ENCODE measurements at regions of chr3 and their contacts with region 1.

Region 1: DNA sequence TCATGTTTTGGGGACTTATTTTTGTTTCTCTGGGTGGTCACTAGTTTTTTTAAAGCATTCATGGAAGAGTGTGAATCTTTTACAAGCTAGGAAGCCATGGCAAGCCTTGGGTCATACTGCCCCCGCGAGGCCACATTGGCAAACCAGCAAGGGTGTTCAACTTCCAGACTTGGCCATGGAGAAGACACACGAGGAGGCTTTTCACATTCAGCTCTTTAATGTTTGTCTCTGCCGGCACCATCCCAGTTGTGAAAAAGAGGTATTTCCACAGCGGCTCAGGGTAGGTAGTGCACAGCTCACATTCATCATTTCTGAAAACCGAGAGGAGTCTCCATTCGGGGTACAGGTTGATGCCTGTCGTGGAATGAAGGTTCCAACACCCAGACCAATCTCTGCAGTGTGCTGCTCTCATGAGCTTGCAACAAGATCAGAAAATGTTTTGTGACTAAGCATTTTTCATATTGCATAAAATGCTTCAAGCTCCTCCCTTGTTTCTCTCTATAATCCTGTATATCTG is 7.7 kb downstream of the CCR5 start:
- DNase-seq: no peak
- ATAC-seq: peak; percentile 90
- H3K4me3 ChIP-seq: no peak overlapping the region
- H3K27ac ChIP-seq: no peak overlapping the region
- H3K4me1 ChIP-seq: peaks cover 12% of the 10 kb centered on the region
- H3K27me3 ChIP-seq: peaks cover 0 to 3% of the 10 kb centered on the region in 2 experiments; a peak in 2 of 4 replicates
- CTCF ChIP-seq: peak; percentile 77 to 80 (median 79)
- EP300 ChIP-seq: no peak
- POLR2A ChIP-seq: no peak
- RAD21 ChIP-seq: peak; percentile 92

Region 2: DNA sequence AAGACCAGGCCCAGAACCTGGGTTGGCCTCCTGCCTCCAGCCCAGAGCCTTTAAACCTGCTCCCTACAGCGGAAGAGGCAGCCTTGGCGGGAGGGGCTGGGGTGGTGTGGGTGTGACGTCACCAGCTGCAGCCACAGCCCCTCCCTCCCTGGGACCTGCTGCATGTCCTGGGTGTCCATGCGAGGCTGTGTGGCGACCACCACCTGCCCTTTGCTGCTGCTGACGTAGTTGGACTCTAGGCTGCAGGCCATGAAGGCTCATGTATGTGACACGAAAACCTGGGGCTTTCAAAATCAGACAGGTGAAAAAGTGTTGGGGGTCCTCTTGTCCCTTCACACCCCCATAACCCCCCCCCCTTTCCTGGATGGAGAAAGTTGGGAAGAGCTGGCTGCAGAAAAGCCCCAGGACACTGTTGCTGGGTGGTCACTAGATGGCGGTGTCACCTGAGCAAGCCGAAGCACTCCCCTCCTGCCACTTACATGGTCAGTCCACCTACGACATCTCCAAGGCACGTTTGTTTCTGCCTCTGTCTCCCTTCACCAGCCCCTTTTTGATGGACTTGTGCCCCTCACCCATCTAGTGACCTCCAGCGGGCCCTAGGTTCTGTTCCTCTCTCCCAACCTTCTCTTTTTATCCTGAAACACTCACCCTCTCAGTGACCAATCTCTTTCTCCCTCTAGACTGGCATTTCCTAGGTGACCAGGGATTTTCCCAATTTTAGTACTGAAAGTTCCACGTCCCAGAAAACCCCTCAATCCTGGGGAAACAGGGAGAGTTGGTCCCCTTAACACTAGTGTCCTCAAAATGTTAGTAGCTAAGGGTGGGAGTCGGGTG is 617.4 kb before region 1 on chr3:
- CTCF ChIA-PET with region 1: no interaction called
- POLR2A ChIA-PET with region 1: no interaction called
- RAD21 ChIA-PET with region 1: no interaction called
- SMC1A ChIA-PET with region 1: interaction called, 4 read pairs
- in situ Hi-C with region 1: loop called (anchors 10 kb)
- intact Hi-C with region 1: no loop called
- DNase-seq: peak; percentile 5
- ATAC-seq: peak; percentile 98
- H3K4me3 ChIP-seq: no peak overlapping the region
- H3K27ac ChIP-seq: no peak overlapping the region
- H3K4me1 ChIP-seq: no peaks in the 10 kb centered on the region
- H3K27me3 ChIP-seq: 0 out of 4 replicates have a peak, but pooled peaks cover 0 to 2% of the 10 kb centered on the region in 2 experiments
- CTCF ChIP-seq: peak; percentile 80 to 89 (median 83)
- EP300 ChIP-seq: no peak
- POLR2A ChIP-seq: no peak
- RAD21 ChIP-seq: peak; percentile 87

Region 3: GRCh38 chr3:46089237-46090011 is 289.1 kb before region 1 on chr3:
- CTCF ChIA-PET with region 1: interaction called, 714 read pairs
- POLR2A ChIA-PET with region 1: interaction called, 3 read pairs
- RAD21 ChIA-PET with region 1: interaction called, 396 read pairs
- SMC1A ChIA-PET with region 1: interaction called, 581 read pairs
- in situ Hi-C with region 1: loop called (anchors 5 kb)
- intact Hi-C with region 1: no loop called
- DNase-seq: peak; percentile 78
- ATAC-seq: peak; percentile 90
- H3K4me3 ChIP-seq: no peak overlapping the region
- H3K27ac ChIP-seq: peak overlapping the region; percentile 20; the same call in 1 of the 2 replicates
- H3K4me1 ChIP-seq: peaks cover 58% of the 10 kb centered on the region
- H3K27me3 ChIP-seq: no peaks in the 10 kb centered on the region
- CTCF ChIP-seq: no peak
- EP300 ChIP-seq: peak; percentile 24 to 75; a peak in 2 of 4 replicates
- POLR2A ChIP-seq: no peak
- RAD21 ChIP-seq: 0 out of 2 replicates have a peak, but pooled peaks have one; percentile 5

Region 4: GRCh38 chr3:46143951-46144473 is 234.5 kb before region 1 on chr3:
- CTCF ChIA-PET with region 1: no interaction called
- POLR2A ChIA-PET with region 1: no interaction called
- RAD21 ChIA-PET with region 1: no interaction called
- SMC1A ChIA-PET with region 1: no interaction called
- in situ Hi-C with region 1: no loop called
- intact Hi-C with region 1: no loop called
- DNase-seq: no peak
- ATAC-seq: no peak
- H3K4me3 ChIP-seq: no peak overlapping the region
- H3K27ac ChIP-seq: no peak overlapping the region
- H3K4me1 ChIP-seq: no peaks in the 10 kb centered on the region
- H3K27me3 ChIP-seq: no peaks in the 10 kb centered on the region
- CTCF ChIP-seq: no peak
- EP300 ChIP-seq: no peak
- POLR2A ChIP-seq: no peak
- RAD21 ChIP-seq: no peak

Region 5: GRCh38 chr3:46276502-46277099 is 101.9 kb before region 1 on chr3:
- CTCF ChIA-PET with region 1: interaction called, 23 read pairs
- POLR2A ChIA-PET with region 1: no interaction called
- RAD21 ChIA-PET with region 1: interaction called, 4 read pairs
- SMC1A ChIA-PET with region 1: interaction called, 3 read pairs
- in situ Hi-C with region 1: no loop called
- intact Hi-C with region 1: no loop called
- DNase-seq: no peak
- ATAC-seq: peak; percentile 90
- H3K4me3 ChIP-seq: no peak overlapping the region
- H3K27ac ChIP-seq: no peak overlapping the region
- H3K4me1 ChIP-seq: peaks cover 27% of the 10 kb centered on the region
- H3K27me3 ChIP-seq: 0 out of 4 replicates have a peak, but pooled peaks cover 0 to 2% of the 10 kb centered on the region in 2 experiments
- CTCF ChIP-seq: peak; percentile 67 to 87 (median 85)
- EP300 ChIP-seq: no peak
- POLR2A ChIP-seq: no peak
- RAD21 ChIP-seq: peak; percentile 83

Region 6: GRCh38 chr3:46297658-46298463 is 80.6 kb before region 1 on chr3:
- CTCF ChIA-PET with region 1: interaction called, 14 read pairs
- POLR2A ChIA-PET with region 1: no interaction called
- RAD21 ChIA-PET with region 1: interaction called, 6 read pairs
- SMC1A ChIA-PET with region 1: interaction called, 91 read pairs
- in situ Hi-C with region 1: no loop called
- intact Hi-C with region 1: no loop called
- DNase-seq: no peak
- ATAC-seq: peak; percentile 20
- H3K4me3 ChIP-seq: no peak overlapping the region
- H3K27ac ChIP-seq: peak overlapping the region; percentile 47; the same call in 1 of the 2 replicates
- H3K4me1 ChIP-seq: peaks cover 68% of the 10 kb centered on the region
- H3K27me3 ChIP-seq: no peaks in the 10 kb centered on the region
- CTCF ChIP-seq: no peak
- EP300 ChIP-seq: no peak
- POLR2A ChIP-seq: no peak
- RAD21 ChIP-seq: no peak

Region 7: DNA sequence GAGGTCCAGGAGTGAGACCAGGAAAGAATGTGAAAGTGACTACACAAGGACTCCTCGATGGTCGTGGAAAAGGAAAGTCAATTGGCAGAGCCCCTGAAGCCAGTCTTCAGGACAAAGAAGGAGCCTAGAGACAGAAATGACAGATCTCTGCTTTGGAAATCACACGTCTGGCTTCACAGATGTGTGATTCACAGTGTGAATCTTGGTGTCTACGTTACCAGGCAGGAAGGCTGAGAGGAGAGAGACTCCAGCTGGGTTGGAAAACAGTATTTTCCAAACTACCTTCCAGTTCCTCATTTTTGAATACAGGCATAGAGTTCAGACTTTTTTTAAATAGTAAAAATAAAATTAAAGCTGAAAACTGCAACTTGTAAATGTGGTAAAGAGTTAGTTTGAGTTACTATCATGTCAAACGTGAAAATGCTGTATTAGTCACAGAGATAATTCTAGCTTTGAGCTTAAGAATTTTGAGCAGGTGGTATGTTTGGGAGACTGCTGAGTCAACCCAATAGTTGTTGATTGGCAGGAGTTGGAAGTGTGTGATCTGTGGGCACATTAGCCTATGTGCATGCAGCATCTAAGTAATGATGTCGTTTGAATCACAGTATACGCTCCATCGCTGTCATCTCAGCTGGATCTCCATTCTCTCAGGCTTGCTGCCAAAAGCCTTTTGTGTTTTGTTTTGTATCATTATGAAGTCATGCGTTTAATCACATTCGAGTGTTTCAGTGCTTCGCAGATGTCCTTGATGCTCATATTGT is 18.6 kb before region 1 on chr3:
- CTCF ChIA-PET with region 1: interaction called, 8 read pairs
- POLR2A ChIA-PET with region 1: interaction called, 4 read pairs
- RAD21 ChIA-PET with region 1: interaction called, 11 read pairs
- SMC1A ChIA-PET with region 1: interaction called, 7 read pairs
- in situ Hi-C with region 1: no loop called
- intact Hi-C with region 1: no loop called
- DNase-seq: peak; percentile 68
- ATAC-seq: peak; percentile 91
- H3K4me3 ChIP-seq: no peak overlapping the region
- H3K27ac ChIP-seq: peak overlapping the region; percentile 45
- H3K4me1 ChIP-seq: peaks cover 40% of the 10 kb centered on the region
- H3K27me3 ChIP-seq: no peaks in the 10 kb centered on the region
- CTCF ChIP-seq: no peak
- EP300 ChIP-seq: peak; percentile 25 to 42; a peak in 1 of 4 replicates
- POLR2A ChIP-seq: no peak
- RAD21 ChIP-seq: no peak

Region 8: DNA sequence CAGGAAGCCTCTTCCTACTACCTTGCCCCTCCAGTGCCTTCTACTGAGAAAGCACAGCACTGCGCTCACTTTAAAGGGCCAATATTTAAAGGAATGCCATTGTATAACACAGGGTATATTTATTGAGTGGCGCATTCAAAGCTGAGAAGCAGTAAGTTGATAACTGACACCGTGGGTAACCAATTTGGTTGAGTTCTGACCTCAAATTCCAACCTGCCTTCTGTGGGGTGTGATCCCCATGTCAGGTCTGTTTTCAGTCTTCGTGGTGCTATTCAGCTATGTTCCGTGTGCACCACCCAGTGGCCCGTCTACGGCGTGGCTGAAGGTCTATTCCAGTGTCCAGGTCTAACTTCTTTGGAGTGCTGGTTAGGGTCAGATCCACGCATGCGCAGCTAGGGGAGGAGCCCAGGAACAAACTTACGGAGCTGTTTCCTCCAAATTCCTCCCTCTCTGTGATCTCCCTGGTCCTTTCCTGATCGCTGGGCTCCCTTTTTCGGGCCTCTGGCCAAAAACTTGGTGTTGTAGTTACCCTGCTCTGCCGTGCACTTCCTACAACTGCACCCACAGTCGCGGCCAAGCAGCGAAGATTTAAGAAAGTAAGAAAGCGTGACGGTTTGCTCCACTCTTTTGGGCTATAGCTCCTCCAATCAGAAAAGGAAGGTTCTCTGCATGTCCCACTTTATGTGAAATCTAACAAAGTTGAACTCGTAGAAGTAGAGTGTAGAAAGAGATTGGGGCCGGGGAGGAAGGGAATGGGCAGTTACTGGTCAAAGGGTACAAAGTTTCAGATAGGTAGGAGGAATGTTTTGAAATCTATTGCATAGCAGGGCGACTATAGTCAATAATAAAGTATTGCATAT is 179.9 kb after region 1 on chr3:
- CTCF ChIA-PET with region 1: interaction called, 4 read pairs
- POLR2A ChIA-PET with region 1: no interaction called
- RAD21 ChIA-PET with region 1: no interaction called
- SMC1A ChIA-PET with region 1: no interaction called
- in situ Hi-C with region 1: no loop called
- intact Hi-C with region 1: loop called (anchors 10 kb)
- DNase-seq: peak; percentile 75
- ATAC-seq: peak; percentile 100
- H3K4me3 ChIP-seq: peak overlapping the region; percentile 66
- H3K27ac ChIP-seq: no peak overlapping the region
- H3K4me1 ChIP-seq: no peaks in the 10 kb centered on the region
- H3K27me3 ChIP-seq: no peaks in the 10 kb centered on the region
- CTCF ChIP-seq: peak; percentile 88 to 95 (median 88)
- EP300 ChIP-seq: no peak
- POLR2A ChIP-seq: no peak
- RAD21 ChIP-seq: peak; percentile 97